CD4-positive, alpha-beta T cell (primary cell): ENCODE measurements at regions of chr1 and their contacts with region 1.

Region 1: DNA sequence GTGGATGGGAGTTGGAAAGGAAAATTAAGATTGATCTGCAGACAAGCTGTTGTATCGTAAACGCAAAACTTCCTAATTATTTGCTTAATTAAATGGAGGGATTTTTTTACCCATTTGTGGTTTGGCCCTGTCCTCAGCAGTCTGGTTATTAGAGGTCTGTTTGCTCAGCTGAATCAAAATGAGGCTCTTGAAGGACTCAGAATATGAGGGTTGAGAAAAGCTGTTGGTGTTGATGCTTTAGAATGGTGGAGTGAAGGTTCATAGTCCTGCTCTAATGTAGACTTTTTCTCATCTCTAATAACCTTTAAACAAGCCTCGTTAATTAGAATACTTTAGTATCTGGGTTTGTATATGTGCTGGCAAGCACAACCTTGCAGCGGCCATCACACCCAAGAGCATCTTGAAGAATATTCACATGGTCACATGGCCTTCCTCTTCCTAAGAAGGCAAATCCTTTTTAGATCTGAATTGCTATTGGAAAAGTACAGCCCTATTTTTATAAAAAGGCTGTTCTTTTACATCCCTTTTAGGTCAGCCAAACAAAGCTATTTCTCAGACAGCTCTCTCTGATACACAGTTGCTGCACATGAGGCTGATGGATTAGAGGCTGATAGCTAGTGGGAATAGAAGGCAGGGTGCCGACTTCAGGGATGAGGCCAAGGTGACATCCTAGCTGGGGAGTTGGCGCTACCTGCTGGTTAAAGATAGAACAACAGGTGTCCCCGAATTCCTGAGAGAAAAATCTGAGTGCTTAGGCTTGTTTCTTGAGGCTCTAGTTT is 53.8 kb downstream of the MACF1 start:
- DNase-seq: peak; percentile 38 to 83 (median 62)
- ATAC-seq: peak; percentile 78
- H3K4me3 ChIP-seq: no peak overlapping the region
- H3K4me3 Mint-ChIP-seq: no peak overlapping the region
- H3K27ac ChIP-seq: peak overlapping the region; percentile 13 to 38
- H3K27ac Mint-ChIP-seq: peak overlapping the region; percentile 83
- H3K4me1 ChIP-seq: peaks cover 14% of the 10 kb centered on the region
- H3K4me1 Mint-ChIP-seq: peaks cover 43% of the 10 kb centered on the region
- H3K27me3 ChIP-seq: no peaks in the 10 kb centered on the region
- H3K27me3 Mint-ChIP-seq: no peaks in the 10 kb centered on the region
- CTCF ChIP-seq: peak; percentile 88

Region 2: GRCh38 chr1:39214998-39215873 is 43.1 kb before region 1 on chr1:
- CTCF ChIA-PET with region 1: interaction called, 11 read pairs
- POLR2A ChIA-PET with region 1: interaction called, 4 read pairs
- intact Hi-C with region 1: no loop called
- DNase-seq: peak in 10 of 14 experiments; percentile 17 to 73 (median 32)
- ATAC-seq: peak; percentile 74
- H3K4me3 ChIP-seq: peak overlapping the region; percentile 62
- H3K4me3 Mint-ChIP-seq: peak overlapping the region; percentile 89
- H3K27ac ChIP-seq: peak overlapping the region; percentile 52 to 77
- H3K27ac Mint-ChIP-seq: peak overlapping the region; percentile 89
- H3K4me1 ChIP-seq: peaks cover 43% of the 10 kb centered on the region
- H3K4me1 Mint-ChIP-seq: peaks cover 59% of the 10 kb centered on the region
- H3K27me3 ChIP-seq: no peaks in the 10 kb centered on the region
- H3K27me3 Mint-ChIP-seq: no peaks in the 10 kb centered on the region
- CTCF ChIP-seq: no peak

Region 3: DNA sequence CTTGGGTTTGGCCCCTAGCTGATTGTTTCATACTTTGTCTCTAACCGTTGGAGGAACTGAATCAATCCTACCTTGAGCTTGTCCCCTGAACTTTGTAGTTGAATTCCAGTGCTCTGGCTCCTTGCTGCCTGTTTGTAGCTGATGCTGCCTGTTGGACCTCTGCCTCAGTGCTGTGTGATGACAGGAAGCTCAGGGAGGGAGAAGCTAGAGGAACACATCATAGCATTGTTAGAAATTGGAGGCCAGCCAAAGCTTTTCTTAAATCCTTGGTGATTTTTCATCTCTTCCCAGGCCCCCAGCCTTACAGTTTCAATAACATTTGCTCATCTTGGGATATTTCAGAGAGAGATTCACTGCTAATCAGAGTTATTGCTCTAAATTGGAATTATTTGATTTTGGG is 19.9 kb before region 1 on chr1:
- CTCF ChIA-PET with region 1: interaction called, 10 read pairs
- POLR2A ChIA-PET with region 1: interaction called, 5 read pairs
- intact Hi-C with region 1: no loop called
- DNase-seq: no peak
- ATAC-seq: no peak
- H3K4me3 ChIP-seq: no peak overlapping the region
- H3K4me3 Mint-ChIP-seq: no peak overlapping the region
- H3K27ac ChIP-seq: no peak overlapping the region
- H3K27ac Mint-ChIP-seq: peak overlapping the region; percentile 75
- H3K4me1 ChIP-seq: peaks cover 22% of the 10 kb centered on the region
- H3K4me1 Mint-ChIP-seq: peaks cover 54% of the 10 kb centered on the region
- H3K27me3 ChIP-seq: no peaks in the 10 kb centered on the region
- H3K27me3 Mint-ChIP-seq: no peaks in the 10 kb centered on the region
- CTCF ChIP-seq: no peak